Posterior cingulate gyrus (tissue), 11 donors: ENCODE measurements at regions of chr7 and their contacts with region 1.

Region 1: DNA sequence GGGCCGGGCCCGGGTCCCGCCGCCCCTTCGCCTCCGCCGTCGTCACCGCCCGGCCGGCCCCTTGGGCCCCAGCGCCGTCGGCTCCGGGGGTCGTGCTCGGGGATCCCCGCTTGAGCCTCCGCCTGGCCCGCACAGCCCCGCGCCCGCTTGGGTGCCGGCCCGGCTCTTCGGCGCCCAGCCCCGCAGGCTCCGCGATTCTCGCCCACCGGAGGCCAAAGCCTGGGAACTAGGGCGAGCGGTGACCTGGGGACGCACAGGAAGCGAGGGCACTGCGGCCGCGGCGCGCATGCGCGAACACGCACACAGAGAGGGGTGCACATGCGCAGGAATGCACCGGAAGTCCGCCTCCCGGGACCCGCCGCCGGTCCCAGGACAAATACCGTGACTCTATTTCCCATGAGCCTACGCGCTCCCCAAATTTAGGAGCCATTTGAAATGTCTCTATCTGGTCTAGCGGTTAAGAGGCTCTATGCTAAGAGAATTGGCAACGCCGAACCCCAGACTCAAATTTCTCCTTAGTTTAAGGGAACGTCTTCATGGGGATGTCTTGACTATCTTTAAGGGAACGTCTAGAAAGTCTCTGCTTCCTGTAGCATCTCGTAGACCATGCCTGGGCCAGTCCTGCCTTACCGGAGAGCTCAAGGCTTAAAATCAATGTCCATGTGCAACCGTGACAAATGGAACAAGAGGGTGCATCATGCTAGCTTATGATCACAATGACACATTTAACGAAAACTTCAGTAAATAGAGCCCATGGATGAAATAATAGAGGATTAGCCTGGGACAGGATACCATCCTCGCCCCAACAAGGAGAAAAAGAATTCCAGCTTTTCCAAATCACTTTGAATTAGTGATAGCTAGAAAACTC is at the start of gene ZNF12:
- DNase-seq: peak; percentile 91 to 99 (median 95)

Region 2: GRCh38 chr7:6294839-6295238 is 412.1 kb before region 1 on chr7:
- intact Hi-C with region 1: no loop called
- DNase-seq: peak in 1 of 10 donors; percentile 48

Region 3: DNA sequence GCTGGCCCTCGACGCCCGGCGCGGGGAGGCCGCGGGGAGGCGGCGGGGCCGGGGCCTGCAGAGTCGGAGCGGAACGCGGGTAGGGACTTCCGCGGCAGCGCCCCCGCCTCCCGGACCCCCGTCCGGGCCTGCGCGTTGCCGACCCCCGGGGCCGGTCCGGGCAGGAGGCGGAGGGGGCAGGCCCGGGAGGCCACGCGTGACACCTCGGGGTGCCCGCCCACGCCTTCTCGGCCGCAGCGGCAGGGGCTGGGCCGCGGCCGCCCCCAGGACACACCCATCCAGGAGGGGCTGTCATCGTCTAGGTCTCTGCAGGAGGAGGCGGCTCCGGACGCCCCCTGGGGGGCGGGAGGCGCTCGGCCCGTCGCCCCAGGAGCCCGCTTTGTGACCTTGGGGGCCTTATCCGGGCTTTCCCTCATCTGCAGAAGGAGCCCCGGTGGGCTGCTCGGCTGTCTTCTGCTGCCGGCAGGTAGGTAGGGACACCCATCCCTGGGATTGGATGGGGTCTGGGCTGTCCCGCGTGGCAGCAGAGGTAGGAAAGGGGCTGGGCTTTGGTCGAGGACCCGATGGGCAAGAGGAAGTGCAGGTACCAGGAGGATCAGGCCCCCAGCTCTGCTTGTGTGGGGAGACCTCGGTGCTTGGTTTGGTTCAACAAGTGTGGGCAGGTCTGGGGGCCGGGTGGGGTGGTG is 69.2 kb before region 1 on chr7:
- intact Hi-C with region 1: loop called (anchors 5 kb)
- DNase-seq: peak in 1 of 10 donors; percentile 86

Region 4: DNA sequence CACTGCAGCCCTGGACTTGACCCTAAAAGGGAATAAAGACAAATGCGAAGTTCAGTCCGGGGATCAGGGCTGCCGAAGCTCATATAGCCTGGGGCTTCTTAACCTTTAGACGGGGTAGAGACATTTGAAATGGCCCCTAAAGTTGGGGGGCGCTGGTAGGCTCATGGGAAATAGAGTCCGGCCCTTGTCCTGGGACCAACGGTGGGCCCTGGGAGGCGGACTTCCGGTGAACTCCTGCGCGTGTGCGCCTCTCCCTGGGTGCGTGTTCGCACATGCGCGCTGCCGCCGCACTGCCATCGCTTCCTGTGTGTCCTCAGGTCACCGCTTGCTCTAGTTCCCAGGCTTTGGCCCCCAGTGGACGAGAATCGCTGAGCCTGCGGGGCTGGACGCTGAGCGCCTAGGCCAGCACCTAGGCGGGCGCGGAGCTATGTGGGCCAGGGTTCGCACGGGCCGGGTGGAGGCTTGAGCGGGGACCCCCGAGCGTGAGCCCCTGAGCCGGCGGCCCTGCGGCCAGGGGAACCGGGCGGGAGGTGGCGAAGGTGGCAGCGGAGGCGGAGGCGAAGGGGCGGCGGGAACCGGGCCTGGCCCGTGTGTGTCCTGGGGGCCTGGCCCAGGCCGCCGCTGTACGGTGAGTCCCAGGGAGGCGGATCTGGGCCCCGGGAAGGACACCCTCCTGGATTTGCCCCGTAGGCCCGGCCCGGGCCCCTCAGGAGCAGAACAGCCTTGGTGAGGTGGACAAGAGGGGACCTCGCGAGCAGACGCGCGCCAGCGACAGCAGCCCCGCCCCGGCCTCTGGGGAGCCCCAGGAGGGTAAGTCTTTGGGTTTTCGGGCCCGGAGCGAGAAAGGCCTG is 22.8 kb after region 1 on chr7:
- intact Hi-C with region 1: loop called (anchors 2 kb)
- DNase-seq: peak; percentile 90 to 99 (median 92)

Region 5: DNA sequence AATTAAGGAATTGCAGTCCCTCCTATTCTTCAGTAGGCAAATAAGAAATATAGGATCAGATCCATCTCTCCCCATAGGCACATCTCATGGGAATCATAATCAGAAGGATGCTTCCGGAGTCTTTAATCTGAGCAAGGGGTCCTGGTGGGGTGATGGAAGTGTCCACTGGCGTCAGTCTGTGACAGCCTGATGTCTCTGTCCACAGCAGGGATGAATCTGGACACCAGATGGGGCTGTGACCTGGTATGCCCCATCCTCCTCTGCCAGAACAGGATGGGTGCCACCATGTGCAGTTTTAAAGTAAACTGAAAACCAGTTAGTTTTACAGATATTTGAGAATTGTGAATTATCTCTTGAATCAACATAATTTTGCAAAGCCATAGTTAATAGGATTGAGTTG is 624.1 kb after region 1 on chr7:
- intact Hi-C with region 1: no loop called
- DNase-seq: no peak